Naive thymus-derived CD8-positive, alpha-beta T cell (primary cell): ENCODE measurements at regions of chr9 and their contacts with region 1.

Region 1: DNA sequence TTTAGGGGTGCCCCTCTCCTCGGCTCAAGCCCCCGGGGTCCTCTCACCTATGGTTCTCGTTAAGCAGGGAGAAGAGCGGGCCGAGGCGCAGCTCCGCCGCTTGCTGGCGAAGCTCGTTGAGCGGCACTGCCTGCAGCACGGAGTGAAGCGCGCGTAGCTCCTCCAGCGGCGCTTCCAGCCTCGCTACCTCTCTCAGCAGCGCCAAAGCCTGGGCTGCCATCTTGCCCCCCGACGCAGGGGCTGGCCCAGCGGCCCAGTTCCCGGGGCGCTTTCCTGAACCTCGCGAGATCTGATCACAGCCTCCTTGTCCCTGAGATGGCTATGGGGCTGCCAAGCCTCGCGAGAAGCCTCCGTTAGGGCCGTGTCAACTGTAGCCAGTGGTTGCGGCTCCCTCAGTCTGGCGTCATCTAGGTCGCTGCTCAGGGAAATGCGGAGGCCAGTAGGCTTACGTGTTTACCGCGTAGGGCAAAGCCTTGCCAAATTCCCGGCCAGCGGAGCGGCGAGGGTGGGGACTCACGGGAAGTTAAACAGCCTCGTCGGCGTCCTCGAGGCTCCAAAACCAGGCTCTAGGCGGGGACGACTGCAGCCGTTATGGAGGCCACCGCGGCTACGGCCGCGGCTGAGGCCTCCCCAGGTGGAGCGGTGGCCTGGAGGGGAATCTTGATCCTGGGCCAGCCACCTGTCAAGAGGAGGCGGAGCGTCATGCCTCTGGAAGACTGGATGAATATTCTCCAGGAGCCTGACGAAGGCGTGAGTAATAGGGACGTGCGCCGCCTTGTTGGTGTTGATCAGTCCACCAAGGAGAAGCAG is at the start of gene PSMD5:
- DNase-seq: peak; percentile 83 to 99 (median 96)
- ATAC-seq: peak; percentile 88
- H3K4me3 Mint-ChIP-seq: peak within 1 kb of the TSS; percentile 90 to 100 (median 93)
- H3K27ac Mint-ChIP-seq: peak within 1 kb of the TSS; percentile 92 to 98 (median 96)
- H3K4me1 Mint-ChIP-seq: peaks cover 40 to 86% (median 81%) of the 10 kb centered on the region in 4 donors
- H3K27me3 Mint-ChIP-seq: no peaks in the 10 kb centered on the region
- polyA plus RNA-seq, gene PSMD5: 13.7 to 23.4 (median 23.3) TPM

Region 2: GRCh38 chr9:120184266-120184665 is 658.6 kb before region 1 on chr9:
- POLR2A ChIA-PET with region 1: no interaction called
- DNase-seq: no peak
- ATAC-seq: no peak
- H3K4me3 Mint-ChIP-seq: no peak overlapping the region
- H3K27ac Mint-ChIP-seq: no peak overlapping the region
- H3K4me1 Mint-ChIP-seq: no peaks in the 10 kb centered on the region
- H3K27me3 Mint-ChIP-seq: peaks cover 0 to 31% (median 3%) of the 10 kb centered on the region in 5 donors

Region 3: GRCh38 chr9:120792898-120793765 is 49.8 kb before region 1 on chr9 and contains the start of gene FBXW2:
- POLR2A ChIA-PET with region 1: interaction called, 19 read pairs
- DNase-seq: peak; percentile 75 to 87 (median 80)
- ATAC-seq: peak; percentile 81 to 84
- H3K4me3 Mint-ChIP-seq: peak within 1 kb of the TSS; percentile 82 to 98 (median 91)
- H3K27ac Mint-ChIP-seq: peak within 1 kb of the TSS; percentile 90 to 99 (median 97)
- H3K4me1 Mint-ChIP-seq: peaks cover 20 to 58% (median 56%) of the 10 kb centered on the region in 4 donors
- H3K27me3 Mint-ChIP-seq: no peaks in the 10 kb centered on the region
- polyA plus RNA-seq, gene FBXW2: 29.6 to 37.1 (median 31.7) TPM

Region 4: DNA sequence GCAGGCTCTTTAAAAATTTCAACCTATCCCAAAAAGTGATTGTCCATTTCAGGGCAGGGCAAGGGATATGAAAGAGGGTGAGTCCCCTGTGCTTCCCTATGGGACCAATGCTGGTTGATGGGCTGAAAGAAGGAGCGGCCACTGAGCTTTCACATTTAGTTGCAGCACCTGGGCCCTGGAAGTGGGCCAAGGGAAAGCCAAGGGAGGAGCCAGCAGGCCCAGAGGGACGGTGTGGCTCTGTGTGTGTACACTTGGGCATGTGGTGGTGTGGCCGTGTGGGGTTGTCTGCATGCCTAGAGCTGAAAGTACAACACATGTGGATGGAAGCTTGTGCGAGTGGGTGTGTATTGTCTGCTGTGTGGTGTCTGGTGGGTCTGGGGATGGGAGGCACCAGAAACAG is 13.8 kb after region 1 on chr9:
- POLR2A ChIA-PET with region 1: interaction called, 12 read pairs
- DNase-seq: no peak
- ATAC-seq: no peak
- H3K4me3 Mint-ChIP-seq: no peak overlapping the region
- H3K27ac Mint-ChIP-seq: peak overlapping the region in 2 of 10 donors; percentile 40 to 62
- H3K4me1 Mint-ChIP-seq: peaks cover 0 to 28% (median 7%) of the 10 kb centered on the region in 4 donors
- H3K27me3 Mint-ChIP-seq: no peaks in the 10 kb centered on the region

Region 5: GRCh38 chr9:120892748-120893610 is 50.1 kb after region 1 on chr9:
- POLR2A ChIA-PET with region 1: interaction called, 12 read pairs
- DNase-seq: peak in 7 of 10 donors; percentile 39 to 82 (median 54)
- ATAC-seq: peak; percentile 29 to 61
- H3K4me3 Mint-ChIP-seq: peak overlapping the region in 9 of 10 donors; percentile 58 to 83 (median 77)
- H3K27ac Mint-ChIP-seq: peak overlapping the region; percentile 90 to 99 (median 98)
- H3K4me1 Mint-ChIP-seq: peaks cover 35 to 90% (median 76%) of the 10 kb centered on the region in 4 donors
- H3K27me3 Mint-ChIP-seq: no peaks in the 10 kb centered on the region

Region 6: DNA sequence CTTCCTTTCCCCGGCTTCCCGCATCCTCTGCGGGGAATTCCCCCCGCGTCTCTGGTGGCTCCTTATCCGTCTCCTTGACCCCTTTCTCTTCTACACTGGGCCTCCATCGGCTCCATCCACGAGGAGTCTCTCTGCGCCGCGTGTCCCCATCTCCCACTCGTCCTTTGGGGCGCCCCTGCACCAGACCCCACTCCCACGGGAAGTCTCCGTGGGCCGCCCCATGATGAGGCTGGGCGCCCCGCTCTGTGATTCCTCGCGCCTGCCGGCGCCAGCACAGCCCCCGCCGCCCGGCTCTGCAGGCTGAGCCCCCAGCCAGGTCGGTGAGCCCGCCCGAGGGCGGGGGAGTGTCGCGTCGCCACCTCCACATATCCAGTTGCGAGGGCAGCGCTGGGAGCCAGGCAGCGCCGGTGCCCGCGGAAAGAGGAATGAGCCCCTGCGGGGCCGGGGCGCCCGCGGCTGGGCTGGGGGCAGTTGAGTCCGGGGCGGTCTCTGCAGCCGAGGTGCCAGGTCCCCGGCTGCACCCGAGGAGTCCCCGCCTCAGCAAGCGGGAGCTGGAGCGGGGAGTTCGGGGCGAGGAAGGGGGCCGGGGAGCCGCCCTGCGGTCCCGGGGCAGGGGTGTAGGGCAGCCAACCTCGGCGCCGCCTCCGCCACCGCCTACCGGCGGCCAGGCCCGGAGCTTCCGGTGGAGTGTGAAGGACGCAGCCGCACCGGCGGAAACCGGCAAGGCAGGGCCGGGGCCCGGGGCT is 85.8 kb after region 1 on chr9:
- POLR2A ChIA-PET with region 1: interaction called, 18 read pairs
- DNase-seq: peak; percentile 49 to 85 (median 72)
- ATAC-seq: peak; percentile 48 to 52
- H3K4me3 Mint-ChIP-seq: peak overlapping the region; percentile 92 to 97 (median 94)
- H3K27ac Mint-ChIP-seq: peak overlapping the region; percentile 95 to 100 (median 98)
- H3K4me1 Mint-ChIP-seq: peaks cover 45 to 90% (median 85%) of the 10 kb centered on the region in 4 donors
- H3K27me3 Mint-ChIP-seq: no peaks in the 10 kb centered on the region